ENCODE measurements at regions of chr5 and their contacts with region 1.

Region 1: GRCh38 chr5:143413958-143414669 is 10.6 kb upstream of the NR3C1 start:
- DNase-seq: peak; percentile 17 to 20
- ATAC-seq: peak in 6 of 8 donors; percentile 49 to 90 (median 66)
- H3K4me3 ChIP-seq: no peak overlapping the region
- H3K27ac ChIP-seq: peak overlapping the region in 3 of 10 donors; percentile 26 to 47 (median 32)
- H3K4me1 ChIP-seq: peaks cover 0 to 21% (median 12%) of the 10 kb centered on the region in 9 donors
- H3K27me3 ChIP-seq: no peaks in the 10 kb centered on the region
- CTCF ChIP-seq: no peak

Region 2: GRCh38 chr5:143495821-143496275 is 81.7 kb after region 1 on chr5:
- intact Hi-C with region 1: loop called in 1 of 10 experiments (anchors 5 kb)
- DNase-seq: peak in 1 of 2 donors; percentile 38
- ATAC-seq: peak; percentile 72 to 88 (median 83)
- H3K4me3 ChIP-seq: peak overlapping the region in 1 of 10 donors; percentile 4
- H3K27ac ChIP-seq: peak overlapping the region in 8 of 10 donors; percentile 16 to 78 (median 34)
- H3K4me1 ChIP-seq: peaks cover 11 to 42% (median 33%) of the 10 kb centered on the region in 9 donors
- H3K27me3 ChIP-seq: no peaks in the 10 kb centered on the region
- CTCF ChIP-seq: no peak

Region 3: GRCh38 chr5:143679777-143680176 is 265.7 kb after region 1 on chr5:
- intact Hi-C with region 1: loop called in 3 of 10 experiments (anchors 10 kb)
- DNase-seq: no peak
- ATAC-seq: peak in 4 of 8 donors; percentile 22 to 80 (median 63)
- H3K4me3 ChIP-seq: no peak overlapping the region
- H3K27ac ChIP-seq: peak overlapping the region in 1 of 10 donors; percentile 18
- H3K4me1 ChIP-seq: peaks cover 0 to 34% (median 10%) of the 10 kb centered on the region in 9 donors
- H3K27me3 ChIP-seq: no peaks in the 10 kb centered on the region
- CTCF ChIP-seq: no peak

Measured in heart right ventricle (tissue), 16 donors.